Pancreas (tissue), 10 donors: ENCODE measurements at regions of chr18 and their contacts with region 1.

Region 1: GRCh38 chr18:53234610-53235009 is 894.6 kb downstream of the DCC start:
- DNase-seq: no peak
- ATAC-seq: no peak
- H3K4me3 ChIP-seq: no peak overlapping the region
- H3K27ac ChIP-seq: no peak overlapping the region
- H3K4me1 ChIP-seq: no peaks in the 10 kb centered on the region
- H3K27me3 ChIP-seq: no peaks in the 10 kb centered on the region
- CTCF ChIP-seq: no peak

Region 2: DNA sequence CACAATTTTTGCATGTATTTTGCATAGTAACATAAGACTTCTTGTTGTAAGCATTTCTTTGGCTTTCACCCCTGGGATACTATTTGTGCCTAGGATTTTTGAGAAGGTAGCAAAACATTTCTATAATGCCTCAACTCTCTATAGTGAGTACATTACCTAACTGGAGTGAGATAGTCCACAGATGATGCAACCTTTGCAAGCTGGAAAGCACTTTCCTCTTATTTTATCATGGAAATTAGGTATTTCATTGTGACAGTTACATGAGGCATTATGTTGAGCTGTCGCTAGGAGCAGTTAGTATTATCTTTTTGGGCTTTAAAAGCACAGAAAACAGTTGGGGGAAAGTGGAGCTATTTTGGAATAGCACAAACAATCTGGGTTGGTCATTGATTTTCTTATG is 108.4 kb before region 1 on chr18:
- intact Hi-C with region 1: no loop called
- DNase-seq: no peak
- ATAC-seq: no peak
- H3K4me3 ChIP-seq: no peak overlapping the region
- H3K27ac ChIP-seq: no peak overlapping the region
- H3K4me1 ChIP-seq: no peaks in the 10 kb centered on the region
- H3K27me3 ChIP-seq: no peaks in the 10 kb centered on the region
- CTCF ChIP-seq: no peak

Region 3: DNA sequence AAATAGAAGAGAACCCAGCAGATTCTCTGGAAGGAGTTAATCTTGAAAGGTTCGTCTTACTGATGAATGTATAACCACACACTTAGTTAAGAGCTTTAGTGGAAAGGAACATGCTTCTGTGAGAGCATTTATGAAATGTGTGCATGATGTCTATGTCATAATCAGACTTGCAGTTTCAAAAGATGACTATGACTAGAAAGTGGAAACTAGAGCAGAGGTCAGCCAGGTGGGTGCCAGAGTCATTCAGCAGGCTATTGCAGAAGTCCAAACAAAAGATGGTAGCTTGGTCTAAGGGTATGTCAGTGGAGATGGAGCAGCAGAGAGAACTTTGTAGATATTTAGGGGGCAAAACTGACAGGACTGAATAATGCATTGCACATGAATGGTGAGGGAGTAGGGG is 68.8 kb before region 1 on chr18:
- intact Hi-C with region 1: loop called in 1 of 3 experiments (anchors 10 kb)
- DNase-seq: no peak
- ATAC-seq: no peak
- H3K4me3 ChIP-seq: no peak overlapping the region
- H3K27ac ChIP-seq: no peak overlapping the region
- H3K4me1 ChIP-seq: no peaks in the 10 kb centered on the region
- H3K27me3 ChIP-seq: no peaks in the 10 kb centered on the region
- CTCF ChIP-seq: no peak